Sigmoid colon (tissue), 7 donors: ENCODE measurements at regions of chr17 and their contacts with region 1.

Region 1: DNA sequence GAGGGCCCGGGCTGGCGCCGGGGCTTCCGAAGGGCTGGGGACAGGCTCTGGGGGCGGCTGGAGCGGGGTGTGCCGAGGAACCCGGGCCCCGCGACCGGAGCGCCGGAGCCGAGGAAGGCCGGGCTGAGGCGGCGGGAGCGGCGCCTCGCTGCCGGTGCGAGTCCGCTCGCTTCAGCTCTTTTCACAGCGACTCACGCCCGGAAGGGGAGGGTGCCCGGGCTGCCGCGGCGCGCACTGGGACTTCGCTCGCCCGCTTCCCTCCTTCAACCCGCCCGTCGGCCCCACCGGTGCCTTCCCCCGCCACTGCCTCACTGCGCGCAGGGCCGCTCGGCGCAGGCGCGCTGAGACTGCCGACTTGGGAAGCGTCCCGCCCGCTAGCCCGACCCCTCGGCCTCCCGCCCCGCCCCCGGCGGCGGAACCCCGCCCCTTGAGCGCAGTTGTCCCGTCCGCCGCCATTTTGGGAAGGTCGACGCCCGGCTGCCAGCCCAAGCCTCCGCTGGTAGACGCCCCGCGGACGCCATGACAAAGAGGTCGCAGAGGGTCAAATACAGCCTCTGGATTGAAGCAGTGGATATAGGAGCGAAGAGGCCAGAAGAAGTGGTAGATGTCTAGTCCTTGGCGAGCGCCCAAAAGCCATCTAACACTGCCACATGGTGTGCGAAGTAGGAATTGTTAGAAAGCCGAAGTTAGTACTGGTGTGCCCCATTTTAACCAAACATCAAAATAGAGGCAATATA is at the start of gene UBE2G1:
- DNase-seq: peak; percentile 99
- H3K4me3 ChIP-seq: peak within 1 kb of the TSS; percentile 80 to 100 (median 88)
- H3K27ac ChIP-seq: peak within 1 kb of the TSS; percentile 98 to 100 (median 98)
- H3K4me1 ChIP-seq: peaks cover 0 to 37% (median 31%) of the 10 kb centered on the region in 4 donors
- H3K27me3 ChIP-seq: no peaks in the 10 kb centered on the region
- CTCF ChIP-seq: no peak
- EP300 ChIP-seq: no peak
- POLR2A ChIP-seq: peak; percentile 57 to 84
- total RNA-seq, gene UBE2G1: 83.2 to 111 (median 96.9) TPM

Region 2: DNA sequence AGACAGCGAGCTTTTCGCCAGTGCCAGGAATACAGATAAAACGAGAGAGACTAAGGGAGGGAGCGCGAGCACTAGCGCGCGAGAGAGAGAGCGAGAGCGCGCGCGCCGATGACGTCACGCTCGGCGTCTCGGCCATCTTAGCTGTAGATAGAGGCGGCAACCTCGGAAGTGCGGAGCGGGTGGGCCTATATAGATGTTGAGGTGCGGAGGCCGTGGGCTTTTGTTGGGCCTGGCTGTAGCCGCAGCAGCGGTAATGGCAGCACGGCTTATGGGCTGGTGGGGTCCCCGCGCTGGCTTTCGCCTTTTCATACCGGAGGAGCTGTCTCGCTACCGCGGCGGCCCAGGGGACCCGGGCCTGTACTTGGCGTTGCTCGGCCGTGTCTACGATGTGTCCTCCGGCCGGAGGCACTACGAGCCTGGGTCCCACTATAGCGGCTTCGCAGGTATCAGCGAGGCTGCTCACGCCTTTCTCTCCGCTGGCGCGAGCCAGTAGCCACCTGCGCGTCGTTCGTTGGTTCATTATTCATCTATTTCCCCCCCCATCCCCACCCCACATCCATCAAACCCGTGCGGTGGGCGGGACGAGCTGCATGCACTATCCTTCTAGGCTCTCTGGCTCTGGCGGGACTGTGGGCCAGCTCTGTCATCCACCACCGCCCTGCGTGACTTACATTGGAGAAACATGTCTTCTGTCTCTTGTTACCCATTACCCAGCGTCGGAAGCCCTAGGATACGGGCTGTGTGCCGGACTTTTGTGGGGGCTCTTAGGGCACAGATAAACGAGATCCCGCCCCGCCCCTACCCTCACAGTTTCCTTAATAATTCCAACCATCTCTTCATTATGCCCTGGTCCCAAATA is 222.7 kb before region 1 on chr17:
- intact Hi-C with region 1: loop called (anchors 5 kb)
- DNase-seq: peak; percentile 96
- H3K4me3 ChIP-seq: peak overlapping the region; percentile 76 to 99 (median 94)
- H3K27ac ChIP-seq: peak overlapping the region; percentile 97 to 100 (median 99)
- H3K4me1 ChIP-seq: peaks cover 0 to 47% (median 44%) of the 10 kb centered on the region in 4 donors
- H3K27me3 ChIP-seq: no peaks in the 10 kb centered on the region
- CTCF ChIP-seq: no peak
- EP300 ChIP-seq: no peak
- POLR2A ChIP-seq: peak; percentile 83 to 85

Region 3: DNA sequence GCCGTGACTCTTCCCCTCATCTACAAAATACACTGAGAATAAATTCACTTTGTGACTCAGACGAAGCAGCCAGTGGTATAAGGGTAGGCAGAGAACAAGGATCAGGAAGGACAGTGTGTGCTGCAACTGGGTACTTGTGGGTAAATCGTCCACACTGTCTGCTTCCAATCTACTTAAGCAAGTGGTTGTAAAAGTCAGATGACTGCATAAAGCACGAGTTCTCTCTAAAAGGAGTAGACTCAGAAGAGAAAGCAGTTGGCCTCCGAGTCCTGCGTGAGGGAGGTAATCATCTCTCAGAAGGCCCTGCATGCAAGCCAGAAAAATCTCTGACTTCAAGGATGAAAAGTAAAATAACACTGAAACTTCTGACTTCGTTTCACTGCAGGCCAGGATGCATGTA is 145.8 kb before region 1 on chr17:
- intact Hi-C with region 1: loop called (anchors 5 kb)
- DNase-seq: peak; percentile 93
- H3K4me3 ChIP-seq: peak overlapping the region in 2 of 4 donors; percentile 2 to 5
- H3K27ac ChIP-seq: peak overlapping the region; percentile 78 to 94 (median 88)
- H3K4me1 ChIP-seq: peaks cover 0 to 70% (median 43%) of the 10 kb centered on the region in 4 donors
- H3K27me3 ChIP-seq: no peaks in the 10 kb centered on the region
- CTCF ChIP-seq: no peak
- EP300 ChIP-seq: peak; percentile 91 to 100 (median 96)
- POLR2A ChIP-seq: peak; percentile 56 to 82

Region 4: DNA sequence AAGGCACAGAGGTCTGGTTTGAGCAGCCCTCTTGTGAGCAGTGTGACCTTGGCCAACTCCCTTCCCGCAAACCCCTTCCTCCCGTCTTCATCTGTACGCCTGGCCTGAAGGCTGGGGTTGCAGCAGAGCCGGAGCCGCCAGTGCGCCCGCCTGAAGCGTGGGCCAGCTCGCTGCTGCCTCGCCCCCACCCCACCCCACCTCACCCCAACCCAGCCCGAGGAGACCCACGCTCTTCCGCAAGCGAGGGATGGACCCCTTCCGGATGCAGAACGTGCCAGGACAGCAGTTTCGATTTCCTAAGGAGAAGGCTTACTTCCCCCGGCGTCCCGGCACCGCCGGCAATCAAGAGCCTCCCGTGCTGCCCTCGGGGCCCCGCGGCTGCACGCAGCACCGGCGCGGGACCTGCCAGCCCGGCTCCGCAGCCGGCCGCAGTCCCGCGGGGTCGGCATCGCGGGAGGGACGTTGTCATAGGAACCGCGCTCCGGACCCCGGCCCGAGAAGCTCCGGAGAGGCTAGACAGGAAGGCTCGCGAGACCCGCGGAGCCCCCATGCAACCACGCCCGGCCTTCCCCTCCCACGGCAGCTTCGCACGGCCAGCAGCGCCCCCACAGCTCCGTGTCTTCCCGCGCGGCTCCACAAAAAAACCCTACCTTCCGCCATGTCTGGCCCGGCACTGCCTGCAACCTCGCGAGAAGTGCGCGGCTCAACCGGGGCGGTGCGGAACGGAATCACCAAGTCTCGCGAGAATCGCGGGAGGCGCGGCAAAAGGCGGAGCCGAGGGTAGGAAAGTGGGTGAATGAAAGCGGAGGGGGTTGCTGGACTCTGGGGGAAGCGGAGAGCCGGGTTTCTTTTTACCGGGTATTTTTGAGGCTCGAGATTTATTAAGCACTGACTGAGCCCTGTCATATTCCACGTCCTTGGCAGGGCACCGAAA is 102.9 kb before region 1 on chr17 and contains the start of gene ANKFY1:
- intact Hi-C with region 1: loop called (anchors 5 kb)
- DNase-seq: peak; percentile 98
- H3K4me3 ChIP-seq: peak within 1 kb of the TSS; percentile 93 to 100 (median 99)
- H3K27ac ChIP-seq: peak within 1 kb of the TSS; percentile 87 to 96 (median 94)
- H3K4me1 ChIP-seq: peaks cover 0 to 33% (median 29%) of the 10 kb centered on the region in 4 donors
- H3K27me3 ChIP-seq: no peaks in the 10 kb centered on the region
- CTCF ChIP-seq: no peak
- EP300 ChIP-seq: no peak
- POLR2A ChIP-seq: peak; percentile 73 to 75
- total RNA-seq, gene ANKFY1: 52.6 to 68.0 (median 59.8) TPM

Region 5: DNA sequence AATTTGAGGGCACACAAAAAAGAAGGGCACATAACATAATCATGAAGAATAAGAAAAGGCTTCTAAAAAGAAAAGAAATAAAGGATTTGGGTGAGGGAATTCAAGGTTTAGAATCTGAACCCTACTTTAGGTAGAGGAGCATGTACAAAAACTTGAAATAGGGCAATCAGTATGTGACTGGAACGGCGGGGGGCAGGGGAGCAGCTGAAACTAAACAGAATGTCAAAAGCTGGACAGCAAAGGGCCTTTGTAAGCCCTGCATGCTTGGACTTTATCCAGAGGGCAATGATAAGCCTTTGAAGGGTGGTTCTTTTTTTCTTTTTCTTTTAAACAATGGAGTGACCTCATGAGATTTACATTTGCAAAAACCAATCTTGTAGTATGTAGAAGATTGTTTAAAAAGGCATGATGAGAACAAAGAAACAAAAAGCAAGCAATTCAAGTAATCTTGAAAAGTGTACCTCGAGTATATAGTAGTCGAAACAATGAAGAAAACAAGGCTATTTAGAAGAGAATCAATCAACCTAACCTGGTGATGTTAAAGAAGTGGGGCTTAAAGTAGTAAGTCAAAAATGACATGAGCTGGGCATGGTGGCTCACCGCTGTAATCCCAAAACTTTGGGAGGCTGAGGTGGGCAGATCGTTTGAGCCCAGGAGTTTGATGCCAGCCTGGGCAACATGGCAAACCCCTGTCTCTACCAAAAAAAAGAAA is 56.0 kb before region 1 on chr17:
- intact Hi-C with region 1: loop called (anchors 5 kb)
- DNase-seq: no peak
- H3K4me3 ChIP-seq: no peak overlapping the region
- H3K27ac ChIP-seq: peak overlapping the region in 3 of 4 donors; percentile 0 to 37 (median 37)
- H3K4me1 ChIP-seq: peaks cover 0 to 75% (median 60%) of the 10 kb centered on the region in 4 donors
- H3K27me3 ChIP-seq: no peaks in the 10 kb centered on the region
- CTCF ChIP-seq: no peak
- EP300 ChIP-seq: no peak
- POLR2A ChIP-seq: no peak

Region 6: GRCh38 chr17:4433515-4434031 is 67.1 kb after region 1 on chr17 and contains the start of gene SPNS3:
- intact Hi-C with region 1: no loop called
- DNase-seq: no peak
- H3K4me3 ChIP-seq: no peak within 1 kb of the TSS
- H3K27ac ChIP-seq: no peak within 1 kb of the TSS
- H3K4me1 ChIP-seq: no peaks in the 10 kb centered on the region
- H3K27me3 ChIP-seq: no peaks in the 10 kb centered on the region
- CTCF ChIP-seq: no peak
- EP300 ChIP-seq: no peak
- POLR2A ChIP-seq: no peak
- total RNA-seq, gene SPNS3: not detected

Region 7: DNA sequence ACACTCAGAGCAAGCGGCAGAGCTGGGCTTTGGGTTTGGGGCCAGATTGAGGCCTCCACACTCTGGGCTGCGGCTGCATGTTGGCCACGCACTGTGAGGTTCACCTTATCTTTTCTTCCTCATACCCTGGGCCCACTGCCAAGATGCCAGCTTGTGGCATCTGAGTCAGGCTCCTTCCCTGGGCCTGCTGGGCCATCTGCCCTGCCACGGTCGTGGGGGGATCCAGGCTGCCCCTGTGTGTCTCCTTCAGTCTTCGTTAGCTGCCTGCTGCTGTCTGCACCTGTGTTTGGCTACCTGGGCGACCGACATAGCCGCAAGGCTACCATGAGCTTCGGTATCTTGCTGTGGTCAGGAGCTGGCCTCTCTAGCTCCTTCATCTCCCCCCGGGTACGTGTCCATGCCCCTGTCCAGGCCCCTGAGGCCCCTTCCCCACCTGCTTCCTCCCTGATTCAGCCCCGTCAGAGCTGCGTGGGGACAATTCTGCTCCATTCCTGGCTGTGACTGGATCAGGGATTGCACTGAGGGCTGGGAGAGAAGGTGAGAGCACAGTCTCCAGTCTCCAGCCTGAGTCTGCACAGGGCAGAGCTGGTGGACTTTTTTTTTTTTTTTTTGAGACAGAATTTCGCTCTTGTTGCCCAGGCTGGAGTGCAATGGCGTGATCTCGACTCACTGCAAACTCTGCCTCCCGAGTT is 78.4 kb after region 1 on chr17:
- intact Hi-C with region 1: no loop called
- DNase-seq: no peak
- H3K4me3 ChIP-seq: no peak overlapping the region
- H3K27ac ChIP-seq: no peak overlapping the region
- H3K4me1 ChIP-seq: no peaks in the 10 kb centered on the region
- H3K27me3 ChIP-seq: no peaks in the 10 kb centered on the region
- CTCF ChIP-seq: no peak
- EP300 ChIP-seq: no peak
- POLR2A ChIP-seq: no peak